H1 (cell line): ENCODE measurements at regions of chr18 and their contacts with region 1.

Region 1: DNA sequence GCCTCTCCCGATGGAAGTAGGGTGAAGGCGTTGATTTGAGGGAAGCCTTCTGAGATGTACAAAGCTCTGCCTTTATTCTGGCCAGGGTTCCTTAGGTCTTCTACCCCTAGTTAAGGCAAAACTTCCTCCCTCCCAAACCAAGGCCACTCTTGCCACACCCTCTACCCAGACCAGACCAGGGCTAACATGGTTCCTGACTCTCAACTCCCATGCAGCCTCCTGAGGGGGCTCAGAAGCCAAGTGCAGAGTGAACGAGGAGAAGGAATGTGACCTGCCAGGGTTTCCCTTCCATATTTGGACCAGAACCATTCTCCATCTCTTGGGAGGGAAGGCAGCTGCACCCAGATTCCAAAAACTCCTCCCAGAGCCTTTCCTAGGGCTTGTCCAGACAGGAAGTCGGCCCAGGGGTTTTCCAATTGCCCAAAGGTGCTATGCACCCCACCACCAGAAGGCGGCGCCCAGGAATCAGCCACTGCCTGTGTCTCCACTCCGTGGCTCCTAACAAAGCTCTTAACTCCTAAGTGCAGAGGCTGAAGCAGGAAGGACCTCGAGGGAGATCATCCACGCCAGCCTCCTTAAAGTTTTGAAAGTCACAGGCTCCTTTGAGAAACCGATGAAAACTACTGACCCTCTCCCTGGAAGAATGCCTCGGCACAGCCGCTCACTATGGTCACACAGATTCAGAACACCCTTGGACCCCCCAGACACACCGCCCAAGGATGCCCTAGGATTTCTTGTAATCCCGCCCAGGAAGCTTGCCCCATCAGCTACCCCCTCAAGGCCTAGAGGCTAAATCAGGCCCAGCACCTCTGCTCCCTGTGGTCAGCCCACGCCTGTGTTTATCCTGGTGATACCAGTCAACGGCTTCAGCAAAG is 157.8 kb downstream of the SMAD2 start:
- DNase-seq: peak; percentile 78 to 99
- H3K4me3 ChIP-seq: no peak overlapping the region
- H3K27ac ChIP-seq: no peak overlapping the region
- H3K4me1 ChIP-seq: no peaks in the 10 kb centered on the region
- H3K27me3 ChIP-seq: no peaks in the 10 kb centered on the region; a peak in 1 of 7 replicates
- CTCF ChIP-seq: peak; percentile 93 to 95 (median 94)
- EP300 ChIP-seq: no peak
- POLR2A ChIP-seq: no peak
- RAD21 ChIP-seq: peak; percentile 91 to 94

Region 2: GRCh38 chr18:47901624-47902362 is 129.2 kb after region 1 on chr18:
- CTCF ChIA-PET with region 1: interaction called, 11 read pairs
- POLR2A ChIA-PET with region 1: no interaction called
- DNase-seq: no peak
- H3K4me3 ChIP-seq: no peak overlapping the region; a peak in 1 of 8 replicates
- H3K27ac ChIP-seq: no peak overlapping the region
- H3K4me1 ChIP-seq: peaks cover 3 to 29% (median 13%) of the 10 kb centered on the region in 4 experiments; a peak in 5 of 7 replicates
- H3K27me3 ChIP-seq: no peaks in the 10 kb centered on the region
- CTCF ChIP-seq: no peak
- EP300 ChIP-seq: no peak
- POLR2A ChIP-seq: no peak
- RAD21 ChIP-seq: no peak

Region 3: DNA sequence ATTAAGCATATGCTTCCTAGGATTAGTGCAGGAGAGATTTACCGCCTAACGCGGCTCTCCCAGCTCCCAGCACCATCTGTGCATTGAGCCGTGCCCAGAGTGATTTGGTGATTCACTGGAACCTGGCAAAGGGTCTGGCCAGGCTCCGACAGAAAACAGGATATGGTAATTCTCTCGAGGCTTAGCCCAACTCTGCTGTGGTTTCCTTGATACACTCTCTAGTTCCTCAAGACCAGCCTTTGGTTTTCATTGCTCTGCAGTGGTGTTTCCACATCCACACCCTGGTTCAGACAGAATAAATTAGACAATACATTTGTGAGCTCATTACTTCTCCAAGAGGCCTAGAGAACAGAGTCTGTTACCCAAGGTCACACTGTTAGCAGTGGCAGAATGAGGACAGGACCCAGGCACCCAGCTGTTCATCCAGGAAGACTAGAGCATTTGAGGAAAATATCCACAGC is 180.9 kb after region 1 on chr18:
- CTCF ChIA-PET with region 1: no interaction called
- POLR2A ChIA-PET with region 1: no interaction called
- DNase-seq: no peak
- H3K4me3 ChIP-seq: no peak overlapping the region
- H3K27ac ChIP-seq: no peak overlapping the region
- H3K4me1 ChIP-seq: peaks cover 0 to 6% (median 0%) of the 10 kb centered on the region in 4 experiments; a peak in 1 of 7 replicates
- H3K27me3 ChIP-seq: no peaks in the 10 kb centered on the region
- CTCF ChIP-seq: no peak
- EP300 ChIP-seq: no peak
- POLR2A ChIP-seq: no peak
- RAD21 ChIP-seq: no peak

Region 4: DNA sequence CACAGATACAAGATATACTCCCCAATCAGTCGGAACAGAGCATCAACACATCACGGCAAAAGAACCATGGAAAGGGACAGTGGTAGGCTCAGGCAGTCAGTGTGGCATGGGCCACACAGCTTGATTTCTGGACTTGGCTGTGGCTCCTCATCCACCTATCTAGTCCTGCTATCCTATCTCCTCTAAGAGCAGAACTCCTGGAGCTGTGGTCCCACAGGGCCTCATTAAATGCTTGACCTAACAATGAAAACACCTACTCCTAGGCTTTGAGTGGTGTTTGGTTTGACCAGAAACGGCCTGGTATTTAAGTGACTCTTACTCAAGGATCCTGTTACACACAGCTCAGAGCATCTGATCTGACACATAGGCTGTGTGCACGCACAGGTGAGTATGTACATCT is 191.4 kb after region 1 on chr18:
- CTCF ChIA-PET with region 1: interaction called, 10 read pairs
- POLR2A ChIA-PET with region 1: no interaction called
- DNase-seq: no peak
- H3K4me3 ChIP-seq: no peak overlapping the region
- H3K27ac ChIP-seq: no peak overlapping the region
- H3K4me1 ChIP-seq: peaks cover under 1 to 15% (median 6%) of the 10 kb centered on the region in 4 experiments; a peak in 5 of 7 replicates
- H3K27me3 ChIP-seq: no peaks in the 10 kb centered on the region
- CTCF ChIP-seq: no peak
- EP300 ChIP-seq: no peak
- POLR2A ChIP-seq: no peak
- RAD21 ChIP-seq: no peak